ENCODE measurements at regions of chr19 and their contacts with region 1.

Region 1: GRCh38 chr19:41144403-41144802 is 30.2 kb downstream of the CYP2F1 start:
- DNase-seq: peak; percentile 50
- H3K4me3 ChIP-seq: no peak overlapping the region
- H3K27ac ChIP-seq: no peak overlapping the region
- H3K27me3 ChIP-seq: peaks cover 6% of the 10 kb centered on the region
- CTCF ChIP-seq: peak; percentile 79

Region 2: DNA sequence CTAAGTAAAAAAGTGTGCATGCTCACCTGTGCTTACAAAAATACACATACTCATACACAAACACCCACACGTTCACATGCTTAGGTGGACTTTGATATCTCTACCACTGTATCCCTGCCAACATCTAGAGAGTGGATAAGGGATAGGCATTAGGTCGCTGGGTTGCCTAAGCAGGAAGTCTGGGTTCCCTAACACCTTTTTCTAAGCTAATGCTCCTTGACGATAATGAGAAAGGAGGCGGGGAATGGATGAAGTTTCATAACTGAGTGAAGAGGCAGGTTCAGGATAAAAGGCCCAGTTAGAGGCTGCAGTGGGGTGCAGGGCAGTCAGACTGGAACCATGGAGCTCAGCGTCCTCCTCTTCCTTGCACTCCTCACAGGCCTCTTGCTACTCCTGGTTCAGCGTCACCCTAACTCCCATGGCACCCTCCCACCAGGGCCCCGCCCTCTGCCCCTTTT is 220.4 kb before region 1 on chr19:
- CTCF ChIA-PET with region 1: no interaction called
- POLR2A ChIA-PET with region 1: no interaction called
- DNase-seq: no peak
- H3K4me3 ChIP-seq: no peak overlapping the region
- H3K27ac ChIP-seq: no peak overlapping the region
- H3K27me3 ChIP-seq: peaks cover 2% of the 10 kb centered on the region
- CTCF ChIP-seq: no peak

Region 3: DNA sequence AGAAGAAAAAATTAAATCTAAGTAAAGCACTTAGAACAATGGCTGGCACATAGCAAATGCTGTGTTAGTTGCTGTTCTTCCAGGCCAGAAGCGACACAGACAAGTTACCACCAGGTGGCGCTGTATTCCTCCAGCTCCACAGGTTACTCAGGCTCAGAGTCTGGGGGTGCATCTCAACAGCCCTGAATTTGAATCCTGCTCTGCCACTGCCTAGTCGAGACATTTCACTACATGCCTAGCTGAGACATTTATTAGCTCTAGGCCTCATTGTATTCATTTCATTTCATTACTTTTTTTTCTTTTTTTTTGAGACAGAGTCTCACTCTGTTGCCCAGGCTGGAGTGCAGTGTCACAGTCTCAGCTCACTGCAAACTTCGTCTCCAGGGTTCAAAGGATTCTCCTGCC is 169.8 kb before region 1 on chr19:
- CTCF ChIA-PET with region 1: interaction called, 14 read pairs
- POLR2A ChIA-PET with region 1: no interaction called
- DNase-seq: peak; percentile 57
- H3K4me3 ChIP-seq: no peak overlapping the region
- H3K27ac ChIP-seq: no peak overlapping the region
- H3K27me3 ChIP-seq: peaks cover 5% of the 10 kb centered on the region
- CTCF ChIP-seq: peak; percentile 91

Region 4: GRCh38 chr19:41116261-41116660 is 28.1 kb before region 1 on chr19:
- CTCF ChIA-PET with region 1: no interaction called
- POLR2A ChIA-PET with region 1: no interaction called
- DNase-seq: no peak
- H3K4me3 ChIP-seq: no peak overlapping the region
- H3K27ac ChIP-seq: no peak overlapping the region
- H3K27me3 ChIP-seq: peaks cover 6% of the 10 kb centered on the region
- CTCF ChIP-seq: no peak

Region 5: DNA sequence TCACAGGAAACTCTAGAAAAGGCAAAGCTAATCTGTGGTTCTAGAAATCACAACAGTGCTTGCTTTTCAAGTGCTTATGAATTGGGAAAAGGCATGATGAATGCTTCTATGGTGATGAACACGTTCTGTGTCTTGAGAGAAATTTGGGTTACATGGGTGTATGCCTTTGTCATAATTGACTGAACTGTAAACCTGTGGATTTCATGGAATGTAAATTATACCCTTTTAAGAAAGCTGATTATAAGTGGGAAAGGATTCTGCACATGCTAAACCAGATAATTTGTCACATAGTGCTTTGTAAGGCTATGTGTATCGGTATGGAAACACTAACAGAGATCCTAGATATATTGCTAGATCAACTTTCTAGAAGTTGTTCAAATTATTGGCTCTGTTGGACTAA is 10.8 kb after region 1 on chr19:
- CTCF ChIA-PET with region 1: interaction called, 17 read pairs
- POLR2A ChIA-PET with region 1: no interaction called
- DNase-seq: no peak
- H3K4me3 ChIP-seq: no peak overlapping the region
- H3K27ac ChIP-seq: no peak overlapping the region
- H3K27me3 ChIP-seq: no peaks in the 10 kb centered on the region
- CTCF ChIP-seq: no peak